PC-9 (cell line): ENCODE measurements at regions of chr3 and their contacts with region 1.

Region 1: GRCh38 chr3:21927261-21927660 is 176.3 kb upstream of the ZNF385D start:
- DNase-seq: no peak
- H3K4me3 ChIP-seq: no peak overlapping the region
- H3K27ac ChIP-seq: no peak overlapping the region
- H3K4me1 ChIP-seq: no peaks in the 10 kb centered on the region
- H3K27me3 ChIP-seq: no peaks in the 10 kb centered on the region
- CTCF ChIP-seq: no peak

Region 2: DNA sequence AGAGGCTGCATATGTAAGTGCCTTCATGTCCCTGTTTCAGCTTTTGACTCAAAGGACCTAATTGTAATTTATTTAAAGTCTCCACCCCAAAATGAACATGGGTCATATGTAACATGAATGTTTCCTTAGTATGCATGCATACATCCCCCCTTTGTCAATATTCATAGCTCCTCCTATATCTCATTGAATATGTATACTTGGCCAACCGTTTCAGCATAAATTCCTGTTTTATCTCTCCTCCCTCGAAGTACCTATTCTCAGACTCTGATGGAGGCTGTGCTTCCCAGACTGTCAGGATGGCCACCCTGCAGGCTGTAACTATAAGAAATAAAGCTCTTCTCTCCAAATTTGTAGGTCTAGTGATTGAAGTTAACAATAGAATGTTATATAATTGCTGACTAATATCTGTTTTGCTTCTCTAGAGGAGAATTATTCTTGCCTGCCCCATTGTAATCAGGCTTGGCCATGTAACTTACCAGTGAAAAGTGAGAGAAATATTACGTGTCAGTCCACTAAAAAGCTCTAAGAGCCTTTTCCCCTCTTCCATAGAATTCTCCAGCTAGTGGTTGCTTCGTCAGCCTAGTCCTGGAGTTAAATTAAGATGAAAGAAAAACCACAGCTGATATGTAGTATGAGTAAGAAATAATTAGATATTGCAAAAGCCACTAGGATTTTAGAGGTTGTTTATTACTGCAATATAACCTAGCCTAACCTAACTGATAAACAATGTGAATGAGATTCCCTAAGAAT is 421.4 kb before region 1 on chr3:
- CTCF ChIA-PET with region 1: no interaction called
- POLR2A ChIA-PET with region 1: no interaction called
- intact Hi-C with region 1: no loop called
- DNase-seq: no peak
- H3K4me3 ChIP-seq: no peak overlapping the region
- H3K27ac ChIP-seq: no peak overlapping the region
- H3K4me1 ChIP-seq: no peaks in the 10 kb centered on the region
- H3K27me3 ChIP-seq: no peaks in the 10 kb centered on the region
- CTCF ChIP-seq: no peak

Region 3: GRCh38 chr3:21750080-21750696 is 177.1 kb before region 1 on chr3:
- CTCF ChIA-PET with region 1: no interaction called
- POLR2A ChIA-PET with region 1: no interaction called
- intact Hi-C with region 1: no loop called
- DNase-seq: peak in 1 of 2 experiments; percentile 59
- H3K4me3 ChIP-seq: peak overlapping the region; percentile 13; the same call in 1 of the 2 replicates
- H3K27ac ChIP-seq: no peak overlapping the region
- H3K4me1 ChIP-seq: no peaks in the 10 kb centered on the region
- H3K27me3 ChIP-seq: no peaks in the 10 kb centered on the region
- CTCF ChIP-seq: no peak

Region 4: DNA sequence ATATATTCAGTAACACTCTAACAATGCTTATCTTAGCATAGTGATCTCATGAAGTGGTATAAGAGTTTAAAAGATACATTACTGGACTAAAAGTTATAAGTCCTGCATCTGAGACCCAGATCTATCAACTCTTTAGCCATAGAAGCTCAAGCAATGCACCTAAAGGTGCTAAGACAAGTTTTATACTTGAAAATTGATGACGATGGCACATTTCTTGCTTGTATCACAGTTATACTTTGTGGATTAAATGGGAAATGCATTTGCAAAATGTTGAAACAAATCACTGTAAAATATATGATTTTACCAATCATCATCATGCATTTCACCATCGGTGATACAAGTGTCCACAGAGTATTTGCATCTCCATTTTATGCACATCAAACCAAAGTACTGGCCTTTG is 349.1 kb after region 1 on chr3:
- CTCF ChIA-PET with region 1: no interaction called
- POLR2A ChIA-PET with region 1: interaction called, 14 read pairs
- intact Hi-C with region 1: no loop called
- DNase-seq: no peak
- H3K4me3 ChIP-seq: no peak overlapping the region
- H3K27ac ChIP-seq: no peak overlapping the region
- H3K4me1 ChIP-seq: no peaks in the 10 kb centered on the region
- H3K27me3 ChIP-seq: no peaks in the 10 kb centered on the region
- CTCF ChIP-seq: no peak